Thyroid gland (tissue), 4 donors: ENCODE measurements at regions of chr22 and their contacts with region 1.

Region 1: DNA sequence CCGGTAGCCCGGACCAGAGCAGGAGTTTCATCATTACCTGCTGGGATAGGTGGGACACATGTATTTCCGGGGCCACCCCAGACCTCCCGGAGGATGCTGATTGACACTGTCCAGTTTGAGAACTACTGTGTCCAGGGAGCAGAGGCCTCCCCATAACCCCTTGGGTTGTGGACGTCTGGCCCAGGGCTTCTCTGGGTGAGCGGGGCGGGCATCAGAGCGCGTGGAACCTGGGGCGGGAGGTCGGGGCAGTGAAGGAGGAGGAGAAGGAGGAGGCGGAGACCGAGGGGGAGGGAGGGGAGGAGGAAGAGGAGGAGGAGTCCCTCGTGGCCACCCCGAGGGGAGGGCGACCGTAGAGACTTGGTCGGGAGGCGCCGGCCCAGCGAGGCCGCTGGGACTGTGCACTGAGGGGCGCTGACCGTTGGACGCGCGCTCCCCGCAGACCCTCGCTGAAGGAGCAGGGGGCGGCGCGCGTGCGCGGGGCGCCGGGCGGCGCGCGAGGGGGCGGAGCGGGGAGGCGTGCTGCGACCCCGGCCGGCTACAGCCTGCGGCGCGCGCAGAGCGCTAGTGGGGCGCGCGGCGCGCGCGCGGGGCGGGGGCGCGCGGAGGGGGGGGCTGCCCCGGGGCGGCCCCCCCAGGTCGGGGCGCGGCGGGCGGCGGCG is at the start of gene GRK3:
- DNase-seq: peak; percentile 83 to 85
- H3K4me3 ChIP-seq: peak within 1 kb of the TSS; percentile 44 to 80 (median 72)
- H3K27ac ChIP-seq: peak within 1 kb of the TSS; percentile 51 to 63 (median 56)
- H3K4me1 ChIP-seq: peaks cover 14 to 35% of the 10 kb centered on the region in 2 donors
- H3K27me3 ChIP-seq: no peaks in the 10 kb centered on the region
- CTCF ChIP-seq: no peak
- POLR2A ChIP-seq: peak in 1 of 2 donors; percentile 59
- total RNA-seq, gene GRK3: 7.6 to 10.7 (median 8.8) TPM

Region 2: DNA sequence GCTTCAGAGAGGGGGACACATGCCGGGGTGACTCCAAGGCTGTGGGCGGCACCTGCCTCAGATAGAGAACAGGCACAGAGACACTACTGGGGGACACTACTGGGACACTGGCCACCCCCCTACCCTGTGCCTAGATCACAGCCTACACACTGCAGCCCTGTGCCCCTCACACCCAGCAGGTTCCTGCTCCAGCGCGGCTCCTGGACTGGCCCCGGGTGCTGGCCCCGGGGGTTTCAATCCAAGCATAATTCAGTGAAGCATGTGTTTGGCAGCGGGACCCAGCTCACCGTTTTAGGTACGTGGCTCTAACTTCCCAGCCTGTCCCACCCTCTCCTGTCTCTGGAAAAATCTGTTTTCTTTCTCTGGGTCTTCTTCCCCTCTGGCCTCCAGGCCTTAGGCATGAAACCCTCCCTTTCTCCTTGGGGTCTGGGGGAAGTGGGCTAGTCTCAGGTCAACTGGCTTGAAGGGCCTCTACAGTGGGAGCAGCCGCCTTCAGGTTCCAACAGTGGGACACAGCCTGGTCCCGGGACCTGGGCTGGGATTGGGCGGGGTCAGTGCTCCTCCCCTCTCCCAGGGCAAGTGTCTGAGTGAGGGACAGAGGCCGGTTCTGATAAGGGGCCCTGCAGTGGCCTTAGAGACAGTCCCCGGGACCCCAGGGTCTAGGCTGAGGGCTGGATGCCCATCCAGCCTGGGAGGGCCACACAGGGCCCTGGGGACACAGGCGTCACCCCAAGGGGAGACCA is 246.2 kb before region 1 on chr22:
- intact Hi-C with region 1: no loop called
- DNase-seq: no peak
- H3K4me3 ChIP-seq: no peak overlapping the region
- H3K27ac ChIP-seq: no peak overlapping the region
- H3K4me1 ChIP-seq: no peaks in the 10 kb centered on the region
- H3K27me3 ChIP-seq: no peaks in the 10 kb centered on the region
- CTCF ChIP-seq: no peak
- POLR2A ChIP-seq: no peak

Region 3: GRCh38 chr22:25362215-25362882 is 202.1 kb before region 1 on chr22:
- intact Hi-C with region 1: no loop called
- DNase-seq: peak; percentile 67 to 72
- H3K4me3 ChIP-seq: no peak overlapping the region
- H3K27ac ChIP-seq: peak overlapping the region in 2 of 3 donors; percentile 36 to 43
- H3K4me1 ChIP-seq: peaks cover 11 to 36% of the 10 kb centered on the region in 2 donors
- H3K27me3 ChIP-seq: no peaks in the 10 kb centered on the region
- CTCF ChIP-seq: peak; percentile 77 to 89 (median 86)
- POLR2A ChIP-seq: no peak

Region 4: GRCh38 chr22:25475257-25476022 is 89.0 kb before region 1 on chr22:
- intact Hi-C with region 1: loop called (anchors 10 kb)
- DNase-seq: peak; percentile 97
- H3K4me3 ChIP-seq: no peak overlapping the region
- H3K27ac ChIP-seq: peak overlapping the region; percentile 44 to 70 (median 66)
- H3K4me1 ChIP-seq: peaks cover 22 to 23% of the 10 kb centered on the region in 2 donors
- H3K27me3 ChIP-seq: no peaks in the 10 kb centered on the region
- CTCF ChIP-seq: no peak
- POLR2A ChIP-seq: no peak